Activated naive CD4-positive, alpha-beta T cell treated with anti-CD3 and anti-CD28 coated beads for 36 hours (primary cell): ENCODE measurements at regions of chr21 and their contacts with region 1.

Region 1: DNA sequence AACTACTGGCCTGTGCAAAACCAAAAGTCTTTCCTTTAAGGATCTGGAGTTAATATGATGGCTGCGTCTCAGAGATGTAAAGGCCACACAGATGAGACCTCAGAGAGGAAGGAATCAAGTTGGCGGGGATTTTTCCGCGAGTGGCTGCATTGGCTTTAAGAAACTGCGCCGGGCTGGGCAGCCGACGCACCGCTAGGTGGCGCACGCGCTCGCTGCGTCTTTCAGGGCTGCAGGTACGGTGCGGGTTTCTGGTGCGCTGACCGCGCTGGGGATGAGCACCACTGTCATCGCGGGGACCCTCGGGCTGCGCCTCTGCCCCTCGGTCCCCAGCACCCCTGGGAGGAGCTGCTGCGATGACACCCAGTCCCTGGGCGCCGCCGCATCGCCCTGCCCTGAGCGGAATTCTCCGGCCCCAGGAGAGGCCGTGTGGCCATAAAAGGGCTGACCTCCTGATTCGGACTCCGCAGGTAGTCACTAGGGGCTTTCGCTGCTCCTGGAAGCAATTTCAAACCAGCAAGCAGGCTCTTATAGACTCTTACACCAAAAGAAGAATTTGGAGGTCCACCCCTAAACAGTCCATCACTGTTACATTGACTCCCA is 241.0 kb downstream of the KCNJ6 start:
- DNase-seq: peak; percentile 70
- H3K4me3 Mint-ChIP-seq: no peak overlapping the region
- H3K27ac Mint-ChIP-seq: no peak overlapping the region
- H3K4me1 Mint-ChIP-seq: peaks cover 2% of the 10 kb centered on the region
- H3K27me3 Mint-ChIP-seq: peaks cover 16% of the 10 kb centered on the region

Region 2: GRCh38 chr21:37563641-37564340 is 111.5 kb before region 1 on chr21:
- CTCF ChIA-PET with region 1: interaction called, 11 read pairs
- intact Hi-C with region 1: no loop called
- DNase-seq: peak; percentile 92
- H3K4me3 Mint-ChIP-seq: peak overlapping the region; percentile 88
- H3K27ac Mint-ChIP-seq: peak overlapping the region; percentile 99
- H3K4me1 Mint-ChIP-seq: peaks cover 20% of the 10 kb centered on the region
- H3K27me3 Mint-ChIP-seq: no peaks in the 10 kb centered on the region

Region 3: DNA sequence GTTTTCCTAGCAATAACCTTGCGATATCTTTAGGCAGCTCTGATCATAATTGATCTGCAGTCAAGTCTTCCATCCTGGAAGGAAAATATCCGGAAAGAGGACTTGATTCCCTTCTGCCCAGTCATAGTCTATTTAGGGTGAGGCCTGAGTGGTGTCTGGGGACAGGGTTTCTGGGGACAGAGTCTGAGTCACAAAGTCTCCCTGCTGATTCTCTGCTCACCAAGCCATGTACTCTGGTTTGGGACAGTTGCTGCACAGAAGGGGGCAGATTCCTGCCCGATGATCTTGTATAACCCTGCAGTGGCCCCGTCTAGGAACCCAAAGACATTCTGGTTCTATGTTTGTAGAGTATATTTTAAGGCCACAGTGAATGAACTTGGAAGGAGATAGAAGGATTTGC is 62.2 kb after region 1 on chr21:
- CTCF ChIA-PET with region 1: no interaction called
- intact Hi-C with region 1: no loop called
- DNase-seq: no peak
- H3K4me3 Mint-ChIP-seq: no peak overlapping the region
- H3K27ac Mint-ChIP-seq: no peak overlapping the region
- H3K4me1 Mint-ChIP-seq: no peaks in the 10 kb centered on the region
- H3K27me3 Mint-ChIP-seq: peaks cover 9% of the 10 kb centered on the region

Region 4: GRCh38 chr21:37751268-37751975 is 76.1 kb after region 1 on chr21:
- CTCF ChIA-PET with region 1: no interaction called
- intact Hi-C with region 1: no loop called
- DNase-seq: no peak
- H3K4me3 Mint-ChIP-seq: no peak overlapping the region
- H3K27ac Mint-ChIP-seq: no peak overlapping the region
- H3K4me1 Mint-ChIP-seq: no peaks in the 10 kb centered on the region
- H3K27me3 Mint-ChIP-seq: peaks cover 3% of the 10 kb centered on the region

Region 5: DNA sequence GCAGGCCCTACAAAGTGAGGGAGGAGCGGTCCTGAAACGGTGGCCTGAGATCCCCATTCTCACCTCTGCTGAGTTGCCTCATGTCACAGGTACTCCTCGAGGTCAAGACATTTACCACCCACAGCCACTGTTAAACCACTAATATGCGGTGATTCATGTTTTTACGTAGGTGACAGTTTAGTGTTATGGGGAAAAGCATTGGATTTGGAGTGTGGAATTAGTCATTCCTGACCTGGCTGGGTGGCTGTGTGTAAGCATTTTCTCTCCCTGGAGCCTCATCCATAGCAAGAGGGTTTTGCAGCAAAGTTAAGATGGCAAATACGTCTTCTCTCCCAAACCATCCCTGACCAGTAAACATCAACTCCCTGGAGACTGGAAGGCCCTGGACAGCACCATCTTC is 298.8 kb after region 1 on chr21:
- CTCF ChIA-PET with region 1: interaction called, 10 read pairs
- intact Hi-C with region 1: no loop called
- DNase-seq: no peak
- H3K4me3 Mint-ChIP-seq: no peak overlapping the region
- H3K27ac Mint-ChIP-seq: no peak overlapping the region
- H3K4me1 Mint-ChIP-seq: no peaks in the 10 kb centered on the region
- H3K27me3 Mint-ChIP-seq: peaks cover 10% of the 10 kb centered on the region

Region 6: GRCh38 chr21:38126669-38127303 is 451.5 kb after region 1 on chr21:
- CTCF ChIA-PET with region 1: interaction called, 6 read pairs
- intact Hi-C with region 1: loop called (anchors 10 kb)
- DNase-seq: peak; percentile 72
- H3K4me3 Mint-ChIP-seq: no peak overlapping the region
- H3K27ac Mint-ChIP-seq: no peak overlapping the region
- H3K4me1 Mint-ChIP-seq: no peaks in the 10 kb centered on the region
- H3K27me3 Mint-ChIP-seq: peaks cover 10% of the 10 kb centered on the region